ENCODE measurements at regions of chr20 and their contacts with region 1.

Region 1: DNA sequence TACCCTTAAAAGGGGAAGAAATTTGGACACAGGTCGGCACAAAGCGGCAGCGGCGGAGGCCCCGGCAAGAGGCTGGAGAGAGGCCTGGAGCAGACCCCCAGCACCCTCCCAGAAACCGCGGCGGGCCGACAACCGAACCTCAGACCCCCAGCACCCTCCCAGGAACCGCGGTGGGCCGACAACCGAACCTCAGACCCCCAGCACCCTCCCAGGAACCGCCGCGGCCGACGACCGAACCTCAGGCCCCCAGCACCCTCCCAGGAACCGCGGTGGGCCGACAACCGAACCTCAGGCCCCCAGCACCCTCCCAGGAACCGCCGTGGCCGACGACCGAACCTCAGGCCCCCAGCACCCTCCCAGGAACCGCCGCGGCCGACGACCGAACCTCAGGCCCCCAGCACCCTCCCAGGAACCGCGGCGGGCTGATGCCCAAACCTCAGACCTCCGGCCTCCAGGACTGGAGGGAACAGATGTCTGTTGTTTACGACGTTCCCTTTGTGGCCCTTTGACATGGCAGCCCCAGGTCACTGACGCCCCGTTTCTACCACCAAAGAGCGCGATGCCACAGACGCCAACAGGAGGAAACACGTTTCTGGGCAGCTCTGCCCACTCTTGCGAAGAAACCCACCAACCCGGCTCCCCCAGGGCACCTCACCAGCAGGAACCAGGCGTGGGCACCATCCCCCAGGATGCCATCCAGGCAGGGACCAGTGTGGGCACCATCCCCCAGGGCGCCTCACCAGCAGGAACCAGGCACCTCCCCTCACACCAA is 28.4 kb downstream of the ZBTB46 start:
- DNase-seq: peak in 2 of 3 donors; percentile 24 to 39
- H3K4me3 ChIP-seq: peak overlapping the region in 4 of 7 experiments; percentile 40 to 75 (median 67)
- H3K27ac ChIP-seq: peak overlapping the region; percentile 64 to 84
- H3K4me1 ChIP-seq: peaks cover 0 to 21% (median 14%) of the 10 kb centered on the region in 4 experiments
- H3K27me3 ChIP-seq: no peaks in the 10 kb centered on the region

Region 2: GRCh38 chr20:63785691-63786131 is 16.9 kb before region 1 on chr20:
- CTCF ChIA-PET with region 1: interaction called, 24 read pairs
- POLR2A ChIA-PET with region 1: no interaction called
- DNase-seq: no peak
- H3K4me3 ChIP-seq: no peak overlapping the region
- H3K27ac ChIP-seq: no peak overlapping the region
- H3K4me1 ChIP-seq: no peaks in the 10 kb centered on the region
- H3K27me3 ChIP-seq: no peaks in the 10 kb centered on the region

Region 3: DNA sequence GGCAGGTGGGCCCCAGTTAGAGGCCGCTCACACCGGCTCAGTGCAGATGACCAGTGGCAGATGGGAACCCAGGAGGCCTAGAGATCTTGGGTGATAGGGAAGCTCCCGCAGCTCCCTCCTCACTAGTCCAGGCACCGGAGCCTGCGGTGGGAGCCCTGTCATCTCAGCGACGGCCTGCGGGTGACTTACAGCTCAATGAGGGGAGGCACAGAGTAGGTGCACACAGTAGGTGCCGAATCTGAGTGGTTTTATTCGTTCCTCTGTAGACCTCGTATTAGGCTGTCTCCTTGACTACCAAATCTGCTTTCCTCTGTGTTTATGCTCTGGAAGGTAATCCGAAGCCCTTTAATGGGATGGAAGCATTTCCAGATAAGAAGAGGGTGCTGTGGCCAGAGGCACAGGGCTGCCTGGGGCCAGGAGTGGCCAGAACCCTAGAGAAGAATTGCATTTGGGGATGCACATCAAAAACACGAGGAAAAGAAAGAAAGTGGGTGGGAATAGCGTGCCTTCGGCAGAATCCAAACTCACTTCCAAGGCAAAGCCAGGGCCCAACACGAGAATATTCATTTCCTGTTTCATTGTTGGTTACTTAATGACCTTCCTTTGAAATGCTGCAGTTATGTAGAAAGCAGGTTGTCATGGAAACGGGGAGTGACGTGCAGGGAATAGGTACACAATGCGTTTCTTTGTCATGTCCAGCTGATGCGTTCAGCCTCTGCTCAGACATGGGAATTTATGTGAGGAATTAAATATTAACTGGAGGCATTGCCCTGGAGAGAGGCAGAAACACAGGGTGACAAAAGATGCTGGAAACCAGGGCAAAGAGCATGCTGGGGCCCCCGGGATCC is 386.3 kb after region 1 on chr20:
- CTCF ChIA-PET with region 1: no interaction called
- POLR2A ChIA-PET with region 1: no interaction called
- DNase-seq: no peak
- H3K4me3 ChIP-seq: no peak overlapping the region
- H3K27ac ChIP-seq: no peak overlapping the region
- H3K4me1 ChIP-seq: no peaks in the 10 kb centered on the region
- H3K27me3 ChIP-seq: peaks cover 0 to 2% (median 0%) of the 10 kb centered on the region in 5 experiments

Measured in common myeloid progenitor, CD34-positive (primary cell).